ENCODE measurements at regions of chr7 and their contacts with region 1.

Region 1: DNA sequence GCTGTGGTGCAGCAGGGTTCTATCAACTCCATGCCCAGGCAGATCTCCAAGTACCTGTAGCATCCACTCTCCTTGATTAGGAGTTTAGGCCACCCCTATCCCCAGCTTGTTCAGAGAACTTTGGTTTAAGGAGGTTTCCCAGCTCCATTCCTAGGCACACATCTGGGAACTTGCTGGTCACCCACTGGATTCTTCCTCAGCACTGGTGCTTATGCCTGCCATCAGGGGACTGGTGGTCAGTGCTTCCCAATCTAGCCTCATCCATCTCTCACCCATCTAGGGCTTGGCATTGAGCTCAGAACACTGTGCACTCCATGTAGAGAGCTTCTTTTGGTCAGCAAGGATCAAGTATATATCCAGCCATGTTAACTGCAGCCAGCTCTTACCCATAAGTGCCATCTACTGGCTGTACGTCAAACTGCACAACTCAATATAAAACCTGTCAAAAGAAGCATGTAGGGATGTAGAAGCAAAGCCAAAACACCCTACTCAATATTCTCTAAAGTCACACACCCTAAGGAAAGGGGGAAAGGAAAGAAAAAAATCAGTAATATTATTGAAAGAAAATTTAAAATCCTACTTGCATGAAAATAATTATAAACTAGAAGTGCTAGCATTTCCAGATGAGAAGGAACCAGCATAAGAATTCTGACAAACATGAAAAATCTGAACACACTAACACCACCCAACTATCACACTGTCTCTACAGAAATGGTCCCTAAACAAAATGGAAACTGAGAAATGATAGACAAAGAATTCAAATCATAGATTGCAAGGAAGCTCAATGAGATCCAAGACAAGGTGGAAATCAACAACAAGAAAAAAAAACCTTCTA is 531.2 kb upstream of the STEAP1 start:
- DNase-seq: peak; percentile 56
- H3K4me3 Mint-ChIP-seq: no peak overlapping the region
- H3K27ac Mint-ChIP-seq: no peak overlapping the region
- H3K4me1 Mint-ChIP-seq: peaks cover 41% of the 10 kb centered on the region
- H3K27me3 Mint-ChIP-seq: no peaks in the 10 kb centered on the region

Region 2: GRCh38 chr7:88243345-88243909 is 1379.6 kb before region 1 on chr7:
- CTCF ChIA-PET with region 1: no interaction called
- intact Hi-C with region 1: loop called (anchors 2 kb)
- DNase-seq: no peak
- H3K4me3 Mint-ChIP-seq: no peak overlapping the region
- H3K27ac Mint-ChIP-seq: no peak overlapping the region
- H3K4me1 Mint-ChIP-seq: no peaks in the 10 kb centered on the region
- H3K27me3 Mint-ChIP-seq: peaks cover 16% of the 10 kb centered on the region

Region 3: GRCh38 chr7:88546808-88547207 is 1076.2 kb before region 1 on chr7:
- CTCF ChIA-PET with region 1: interaction called, 5 read pairs
- intact Hi-C with region 1: loop called (anchors 1 kb)
- DNase-seq: peak; percentile 49
- H3K4me3 Mint-ChIP-seq: no peak overlapping the region
- H3K27ac Mint-ChIP-seq: no peak overlapping the region
- H3K4me1 Mint-ChIP-seq: no peaks in the 10 kb centered on the region
- H3K27me3 Mint-ChIP-seq: peaks cover 5% of the 10 kb centered on the region

Region 4: DNA sequence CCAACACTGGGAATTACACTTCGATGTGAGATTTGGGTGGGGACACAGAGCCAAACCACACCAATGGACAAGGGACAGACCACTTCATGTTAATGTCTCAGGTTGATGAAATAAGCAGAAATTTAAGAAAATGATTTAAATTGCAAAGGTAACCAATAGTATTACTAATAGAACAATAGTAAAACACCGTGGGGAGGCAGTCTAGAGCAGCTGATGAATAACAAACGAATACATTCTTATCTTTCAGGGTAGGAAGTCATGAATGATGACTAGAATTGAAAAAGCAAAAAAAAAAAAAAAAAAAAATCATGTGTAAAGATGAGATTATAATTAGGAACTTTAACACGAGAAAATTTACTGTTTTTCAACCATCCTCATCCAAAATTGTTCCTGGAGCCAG is 655.6 kb before region 1 on chr7:
- CTCF ChIA-PET with region 1: no interaction called
- intact Hi-C with region 1: loop called (anchors 5 kb)
- DNase-seq: no peak
- H3K4me3 Mint-ChIP-seq: no peak overlapping the region
- H3K27ac Mint-ChIP-seq: no peak overlapping the region
- H3K4me1 Mint-ChIP-seq: no peaks in the 10 kb centered on the region
- H3K27me3 Mint-ChIP-seq: peaks cover 2% of the 10 kb centered on the region

Region 5: GRCh38 chr7:89238156-89238555 is 384.9 kb before region 1 on chr7:
- CTCF ChIA-PET with region 1: no interaction called
- intact Hi-C with region 1: loop called (anchors 5 kb)
- DNase-seq: no peak
- H3K4me3 Mint-ChIP-seq: no peak overlapping the region
- H3K27ac Mint-ChIP-seq: no peak overlapping the region
- H3K4me1 Mint-ChIP-seq: peaks cover 20% of the 10 kb centered on the region
- H3K27me3 Mint-ChIP-seq: no peaks in the 10 kb centered on the region

Region 6: GRCh38 chr7:90119178-90119971 is 496.3 kb after region 1 on chr7:
- CTCF ChIA-PET with region 1: no interaction called
- intact Hi-C with region 1: loop called (anchors 10 kb)
- DNase-seq: peak; percentile 51
- H3K4me3 Mint-ChIP-seq: peak overlapping the region; percentile 50
- H3K27ac Mint-ChIP-seq: no peak overlapping the region
- H3K4me1 Mint-ChIP-seq: peaks cover 5% of the 10 kb centered on the region
- H3K27me3 Mint-ChIP-seq: peaks cover 23% of the 10 kb centered on the region

Region 7: GRCh38 chr7:90788052-90788451 is 1165.0 kb after region 1 on chr7:
- CTCF ChIA-PET with region 1: no interaction called
- intact Hi-C with region 1: no loop called
- DNase-seq: no peak
- H3K4me3 Mint-ChIP-seq: no peak overlapping the region
- H3K27ac Mint-ChIP-seq: no peak overlapping the region
- H3K4me1 Mint-ChIP-seq: no peaks in the 10 kb centered on the region
- H3K27me3 Mint-ChIP-seq: peaks cover 2% of the 10 kb centered on the region

Measured in activated naive CD4-positive, alpha-beta T cell treated with anti-CD3 and anti-CD28 coated beads for 36 hours (primary cell).